IMR-90 (cell line): ENCODE measurements at regions of chr18 and their contacts with region 1.

Region 1: DNA sequence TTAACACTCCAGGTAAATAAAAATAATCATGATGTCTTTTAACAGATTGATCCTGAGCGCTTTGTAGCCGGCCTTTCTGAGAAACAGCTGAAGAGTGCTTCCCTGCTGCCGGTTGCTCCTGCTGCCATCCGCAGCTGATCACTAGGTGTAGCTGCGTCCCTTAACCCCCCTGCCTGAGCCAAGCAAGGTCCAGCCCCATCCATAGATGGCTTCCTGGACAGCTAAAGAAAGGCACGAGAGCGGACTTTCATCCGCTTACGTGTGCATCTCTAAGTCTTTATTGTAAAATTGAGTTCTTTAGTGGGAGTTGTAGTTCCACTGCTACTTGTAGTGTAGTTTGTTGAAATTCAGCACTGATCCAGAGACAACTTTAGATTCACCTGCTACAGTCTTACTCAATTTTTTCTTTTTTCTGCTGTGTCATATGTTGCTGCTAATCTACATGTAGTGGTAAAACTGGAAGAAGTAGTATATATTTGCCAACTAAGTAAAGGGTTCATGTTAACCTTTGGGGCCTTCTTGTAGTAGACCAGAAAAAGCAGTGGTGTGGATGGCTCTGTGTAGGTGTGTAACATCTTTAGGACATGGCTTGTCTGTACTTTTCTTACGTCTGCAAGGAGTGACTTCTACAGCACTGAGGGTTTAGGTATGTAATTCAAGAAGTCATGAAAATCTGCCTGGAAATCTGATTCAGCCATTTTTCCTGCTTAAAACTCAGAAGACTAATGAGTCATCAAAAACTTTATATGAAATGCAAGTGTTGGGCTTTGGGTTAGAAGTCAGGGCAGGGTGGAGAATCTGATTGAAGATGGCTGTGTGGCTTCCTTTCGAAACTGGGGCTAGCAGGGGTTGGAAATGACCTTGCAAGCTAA is 8.3 kb downstream of the PTPRM start:
- DNase-seq: peak; percentile 67
- ATAC-seq: peak; percentile 36
- H3K4me3 ChIP-seq: no peak overlapping the region
- H3K27ac ChIP-seq: no peak overlapping the region; the same call in 1 of the 2 replicates
- H3K4me1 ChIP-seq: peaks cover 29% of the 10 kb centered on the region
- H3K27me3 ChIP-seq: no peaks in the 10 kb centered on the region
- CTCF ChIP-seq: no peak
- POLR2A ChIP-seq: no peak
- RAD21 ChIP-seq: no peak

Region 2: GRCh38 chr18:7617738-7618422 is 42.5 kb after region 1 on chr18:
- CTCF ChIA-PET with region 1: no interaction called
- POLR2A ChIA-PET with region 1: no interaction called
- dilution Hi-C with region 1: no loop called
- in situ Hi-C with region 1: no loop called
- intact Hi-C with region 1: loop called (anchors 5 kb)
- DNase-seq: peak; percentile 70
- ATAC-seq: peak; percentile 72
- H3K4me3 ChIP-seq: peak overlapping the region; percentile 24; the same call in 1 of the 2 replicates
- H3K27ac ChIP-seq: no peak overlapping the region; the same call in 1 of the 2 replicates
- H3K4me1 ChIP-seq: peaks cover 14% of the 10 kb centered on the region
- H3K27me3 ChIP-seq: no peaks in the 10 kb centered on the region
- CTCF ChIP-seq: no peak
- POLR2A ChIP-seq: no peak
- RAD21 ChIP-seq: no peak

Region 3: GRCh38 chr18:7921938-7922587 is 346.7 kb after region 1 on chr18:
- CTCF ChIA-PET with region 1: no interaction called
- POLR2A ChIA-PET with region 1: no interaction called
- dilution Hi-C with region 1: no loop called
- in situ Hi-C with region 1: loop called (anchors 25 kb)
- intact Hi-C with region 1: no loop called
- DNase-seq: peak; percentile 59
- ATAC-seq: peak; percentile 62
- H3K4me3 ChIP-seq: no peak overlapping the region
- H3K27ac ChIP-seq: peak overlapping the region; percentile 19; the same call in 1 of the 2 replicates
- H3K4me1 ChIP-seq: peaks cover 10% of the 10 kb centered on the region
- H3K27me3 ChIP-seq: no peaks in the 10 kb centered on the region
- CTCF ChIP-seq: peak; percentile 39
- POLR2A ChIP-seq: no peak
- RAD21 ChIP-seq: peak; percentile 49

Region 4: GRCh38 chr18:8121942-8122480 is 546.6 kb after region 1 on chr18:
- CTCF ChIA-PET with region 1: no interaction called
- POLR2A ChIA-PET with region 1: no interaction called
- dilution Hi-C with region 1: no loop called
- in situ Hi-C with region 1: no loop called
- intact Hi-C with region 1: loop called (anchors 10 kb)
- DNase-seq: peak; percentile 94
- ATAC-seq: peak; percentile 51
- H3K4me3 ChIP-seq: no peak overlapping the region
- H3K27ac ChIP-seq: no peak overlapping the region
- H3K4me1 ChIP-seq: peaks cover 6% of the 10 kb centered on the region
- H3K27me3 ChIP-seq: no peaks in the 10 kb centered on the region
- CTCF ChIP-seq: no peak
- POLR2A ChIP-seq: no peak
- RAD21 ChIP-seq: no peak

Region 5: DNA sequence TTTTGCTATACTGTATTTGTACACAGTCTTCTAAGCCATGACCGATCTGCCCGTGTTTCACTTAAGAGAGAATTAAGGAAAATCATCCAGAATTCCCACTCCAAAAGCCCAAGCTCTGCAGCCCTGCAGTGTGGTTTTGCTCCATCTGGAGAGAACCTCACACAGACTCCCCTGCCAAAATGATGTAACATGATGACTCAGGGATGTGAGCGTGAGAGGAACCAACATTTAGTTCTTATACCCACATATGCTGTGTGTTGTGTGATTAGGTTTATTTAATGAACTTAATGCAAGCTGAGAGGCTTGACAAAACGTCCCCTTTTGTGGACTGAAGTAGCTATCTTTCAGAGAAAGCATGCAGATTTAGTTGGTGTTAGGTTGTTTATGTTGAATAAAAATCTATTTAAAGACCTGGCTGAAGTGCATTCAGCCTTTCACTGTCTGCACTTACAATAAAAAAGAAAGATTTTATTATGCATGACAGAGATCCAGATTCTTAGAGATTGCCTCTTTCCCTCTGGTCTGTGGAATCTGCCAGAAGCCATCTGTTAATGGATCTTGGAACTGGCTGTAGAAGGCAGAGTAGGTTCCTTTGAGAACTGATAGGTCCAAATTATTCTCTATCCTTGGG is 1040.1 kb after region 1 on chr18:
- CTCF ChIA-PET with region 1: no interaction called
- POLR2A ChIA-PET with region 1: no interaction called
- dilution Hi-C with region 1: no loop called
- in situ Hi-C with region 1: no loop called
- intact Hi-C with region 1: loop called (anchors 5 kb)
- DNase-seq: peak; percentile 97
- ATAC-seq: peak; percentile 88
- H3K4me3 ChIP-seq: no peak overlapping the region
- H3K27ac ChIP-seq: no peak overlapping the region; the same call in 1 of the 2 replicates
- H3K4me1 ChIP-seq: peaks cover 15% of the 10 kb centered on the region
- H3K27me3 ChIP-seq: no peaks in the 10 kb centered on the region
- CTCF ChIP-seq: no peak
- POLR2A ChIP-seq: no peak
- RAD21 ChIP-seq: no peak